A549 (cell line): ENCODE measurements at regions of chr11 and their contacts with region 1.

Region 1: DNA sequence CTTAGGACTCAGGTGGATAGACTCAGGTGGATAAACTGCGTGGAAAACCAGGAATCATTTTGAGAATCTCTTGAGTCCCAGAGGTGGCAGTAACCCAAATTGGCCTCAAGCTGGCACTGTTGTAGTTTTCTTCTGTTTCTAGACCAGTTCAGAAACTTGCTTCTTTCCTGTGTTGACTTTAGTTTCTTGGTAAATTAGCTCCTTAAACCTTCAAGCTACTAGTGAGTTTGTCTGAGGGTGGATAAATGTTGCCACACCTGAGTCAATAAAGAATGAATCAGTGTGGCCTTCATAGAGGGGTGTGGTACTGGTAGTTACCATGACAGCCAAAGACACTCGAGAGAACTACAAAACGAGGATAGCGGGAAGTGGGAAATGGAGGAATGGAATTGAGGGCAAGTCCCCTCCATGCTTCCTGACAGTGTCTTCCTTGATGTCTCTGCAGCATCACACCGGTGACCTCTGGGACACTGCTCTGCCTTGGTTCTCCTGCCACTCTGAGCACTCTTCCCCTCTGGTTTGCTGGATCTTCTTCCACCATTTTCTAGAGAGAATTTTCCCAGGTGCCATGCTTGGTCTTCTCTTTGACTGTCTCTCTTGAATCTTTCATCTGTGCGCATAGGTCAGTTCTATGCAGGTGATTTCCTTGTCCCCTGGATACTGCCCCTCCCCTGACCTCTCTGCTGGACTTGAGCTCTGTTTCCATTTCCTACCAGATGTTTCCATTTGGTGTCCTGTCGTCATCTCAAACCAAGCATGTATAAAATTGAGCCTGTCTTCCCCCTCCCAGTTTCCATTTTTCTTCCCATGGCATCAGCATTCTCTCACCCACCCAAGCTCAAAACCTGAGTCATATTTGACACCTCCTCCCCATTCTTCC is 7.2 kb downstream of the POLD4 start:
- DNase-seq: peak; percentile 83 to 97
- ATAC-seq: peak; percentile 84 to 90
- H3K4me3 ChIP-seq: no peak overlapping the region
- H3K27ac ChIP-seq: peak overlapping the region; percentile 65 to 82
- H3K4me1 ChIP-seq: peaks cover 62% of the 10 kb centered on the region
- CTCF ChIP-seq: peak; percentile 96
- EP300 ChIP-seq: peak; percentile 23 to 54; a peak in 1 of 5 replicates
- POLR2A ChIP-seq: no peak
- RAD21 ChIP-seq: peak; percentile 88

Region 2: GRCh38 chr11:67211656-67212436 is 134.3 kb before region 1 on chr11:
- CTCF ChIA-PET with region 1: no interaction called
- POLR2A ChIA-PET with region 1: no interaction called
- DNase-seq: no peak
- ATAC-seq: no peak
- H3K4me3 ChIP-seq: no peak overlapping the region
- H3K27ac ChIP-seq: no peak overlapping the region
- H3K4me1 ChIP-seq: no peaks in the 10 kb centered on the region
- CTCF ChIP-seq: no peak
- EP300 ChIP-seq: no peak
- POLR2A ChIP-seq: no peak
- RAD21 ChIP-seq: no peak

Region 3: GRCh38 chr11:67273260-67273992 is 72.7 kb before region 1 on chr11:
- CTCF ChIA-PET with region 1: no interaction called
- POLR2A ChIA-PET with region 1: no interaction called
- DNase-seq: no peak
- ATAC-seq: no peak
- H3K4me3 ChIP-seq: no peak overlapping the region
- H3K27ac ChIP-seq: no peak overlapping the region
- H3K4me1 ChIP-seq: peaks cover 11% of the 10 kb centered on the region; the same call in 1 of the 3 replicates
- CTCF ChIP-seq: no peak
- EP300 ChIP-seq: no peak
- POLR2A ChIP-seq: no peak
- RAD21 ChIP-seq: no peak

Region 4: DNA sequence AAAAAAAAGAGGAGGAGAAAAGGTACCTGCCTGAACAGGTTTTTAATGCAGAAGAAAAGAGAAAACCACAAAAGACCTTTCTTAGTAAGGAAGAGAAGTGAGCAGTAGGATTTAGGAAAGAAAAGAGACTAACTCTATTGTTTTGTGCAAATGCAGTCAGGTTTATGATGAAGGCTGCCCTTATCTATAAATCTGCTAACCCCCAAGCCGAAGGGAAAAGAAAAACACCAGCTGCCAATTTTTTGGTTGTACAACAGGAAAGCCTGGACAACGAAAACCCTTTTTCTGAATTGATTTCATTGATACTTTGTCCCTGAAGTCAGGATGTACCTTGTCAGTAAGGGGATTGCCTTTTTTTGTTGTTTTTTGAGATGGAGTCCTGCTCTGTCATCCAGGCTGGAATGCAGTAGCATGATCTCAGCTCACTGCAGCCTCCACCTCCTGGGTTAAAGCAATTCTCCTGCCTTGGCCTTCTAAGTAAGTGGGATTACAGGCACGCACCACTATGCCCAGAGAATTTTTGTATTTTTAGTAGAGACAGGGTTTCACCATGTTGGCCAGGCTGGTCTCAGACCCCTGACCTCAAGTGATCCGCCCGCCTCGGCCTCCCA is 14.0 kb before region 1 on chr11:
- CTCF ChIA-PET with region 1: interaction called, 71 read pairs
- POLR2A ChIA-PET with region 1: no interaction called
- DNase-seq: no peak
- ATAC-seq: no peak
- H3K4me3 ChIP-seq: no peak overlapping the region
- H3K27ac ChIP-seq: no peak overlapping the region
- H3K4me1 ChIP-seq: no peaks in the 10 kb centered on the region
- CTCF ChIP-seq: no peak
- EP300 ChIP-seq: no peak
- POLR2A ChIP-seq: no peak
- RAD21 ChIP-seq: no peak

Region 5: DNA sequence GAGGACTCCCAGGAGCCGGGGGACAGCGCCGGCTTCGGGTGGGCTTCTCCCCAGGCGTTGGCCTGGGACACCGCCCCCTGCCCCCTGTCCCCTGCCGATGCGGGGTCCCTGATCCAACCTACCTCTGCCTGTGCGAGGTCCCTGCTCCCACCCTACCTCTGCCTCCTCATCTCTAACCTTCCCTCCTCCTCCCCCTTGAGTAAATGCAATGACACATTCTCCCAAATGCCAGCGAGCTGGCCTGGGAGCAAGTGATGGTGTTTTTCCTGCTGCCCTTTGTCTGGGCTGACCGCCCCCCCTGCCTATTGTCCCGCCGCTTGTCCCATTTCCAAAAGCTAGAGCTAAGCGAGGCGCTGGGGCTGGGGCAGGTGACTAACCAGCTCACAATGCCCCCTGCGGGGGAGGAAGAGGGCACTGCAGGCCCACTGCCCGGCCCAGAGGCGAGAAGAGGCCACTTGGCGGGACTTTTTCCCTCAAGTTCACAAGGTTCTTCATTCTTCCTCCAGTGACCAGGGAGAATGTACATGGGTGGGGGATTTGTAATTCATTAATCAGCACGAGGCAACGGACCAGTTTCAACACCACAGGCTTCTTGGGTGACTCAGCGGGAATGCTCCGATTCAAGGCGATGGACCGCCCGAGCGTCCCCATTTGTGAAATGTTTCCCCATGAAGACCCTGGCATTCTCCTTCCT is 27.9 kb after region 1 on chr11:
- CTCF ChIA-PET with region 1: interaction called, 1,913 read pairs
- POLR2A ChIA-PET with region 1: interaction called, 172 read pairs
- DNase-seq: peak; percentile 96 to 100
- ATAC-seq: peak; percentile 41 to 71
- H3K4me3 ChIP-seq: peak overlapping the region; percentile 68
- H3K27ac ChIP-seq: peak overlapping the region; percentile 95 to 100
- H3K4me1 ChIP-seq: peaks cover 73% of the 10 kb centered on the region
- CTCF ChIP-seq: peak; percentile 29
- EP300 ChIP-seq: peak; percentile 87 to 93; a peak in 4 of 5 replicates
- POLR2A ChIP-seq: peak; percentile 36
- RAD21 ChIP-seq: peak; percentile 41 to 58

Region 6: DNA sequence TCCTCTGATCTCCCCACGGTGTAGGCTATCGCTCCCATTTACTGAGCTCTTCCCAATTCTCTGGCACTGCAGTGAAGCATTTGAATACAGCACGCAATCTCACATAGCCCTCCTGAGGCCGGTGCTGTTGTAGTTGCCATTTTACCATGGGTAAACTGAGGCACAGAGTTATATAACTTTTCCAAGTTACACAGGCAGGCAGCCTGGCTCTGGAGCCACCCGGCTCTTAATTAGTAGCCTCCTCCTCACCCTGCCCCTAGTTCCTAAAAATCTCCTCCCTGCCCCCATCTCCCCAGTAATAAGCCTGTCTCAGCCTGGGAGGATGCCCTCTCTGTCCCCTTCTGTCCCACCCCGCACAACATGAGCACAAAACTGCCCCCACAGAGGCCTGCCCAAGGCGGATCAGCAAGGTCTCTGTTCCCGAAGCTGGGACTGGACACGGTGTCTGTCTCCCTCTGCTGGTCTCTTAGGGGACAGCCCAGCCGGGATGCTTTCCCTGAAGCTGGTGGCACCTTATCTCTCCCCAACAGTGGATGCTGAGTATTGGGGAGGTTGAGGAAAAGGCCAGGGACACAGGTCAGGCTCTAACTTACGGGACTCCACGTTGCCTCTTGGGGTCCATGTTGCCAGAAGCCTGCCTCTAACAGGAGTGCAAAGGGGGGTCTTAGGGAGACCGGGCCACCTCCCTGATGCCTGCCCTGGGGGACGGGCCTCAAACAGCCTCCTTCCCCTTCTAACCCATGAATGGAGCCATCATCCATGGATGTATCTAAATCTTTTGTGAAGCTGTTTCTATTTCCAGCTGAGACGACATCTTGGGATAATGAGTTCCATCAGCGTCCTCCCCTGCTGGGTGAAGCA is 36.3 kb after region 1 on chr11:
- CTCF ChIA-PET with region 1: interaction called, 1,913 read pairs
- POLR2A ChIA-PET with region 1: interaction called, 172 read pairs
- DNase-seq: peak; percentile 74 to 83
- ATAC-seq: peak; percentile 63 to 65
- H3K4me3 ChIP-seq: no peak overlapping the region
- H3K27ac ChIP-seq: peak overlapping the region; percentile 95 to 100
- H3K4me1 ChIP-seq: peaks cover 82% of the 10 kb centered on the region
- CTCF ChIP-seq: peak; percentile 98
- EP300 ChIP-seq: no peak
- POLR2A ChIP-seq: no peak
- RAD21 ChIP-seq: peak; percentile 99 to 100

Region 7: GRCh38 chr11:67391304-67392132 is 45.4 kb after region 1 on chr11 and contains the start of gene RAD9A:
- CTCF ChIA-PET with region 1: interaction called, 1,913 read pairs
- POLR2A ChIA-PET with region 1: interaction called, 5 read pairs
- DNase-seq: peak; percentile 94 to 97
- ATAC-seq: peak; percentile 59 to 77
- H3K4me3 ChIP-seq: peak within 1 kb of the TSS; percentile 77
- H3K27ac ChIP-seq: peak within 1 kb of the TSS; percentile 85 to 90
- H3K4me1 ChIP-seq: peaks cover 19% of the 10 kb centered on the region; the same call in 2 of the 3 replicates
- CTCF ChIP-seq: no peak
- EP300 ChIP-seq: no peak; a peak in 1 of 5 replicates
- POLR2A ChIP-seq: peak; percentile 51
- RAD21 ChIP-seq: no peak
- polyA plus RNA-seq, gene RAD9A: 19.0 and 19.6 TPM in 2 replicates

Region 8: DNA sequence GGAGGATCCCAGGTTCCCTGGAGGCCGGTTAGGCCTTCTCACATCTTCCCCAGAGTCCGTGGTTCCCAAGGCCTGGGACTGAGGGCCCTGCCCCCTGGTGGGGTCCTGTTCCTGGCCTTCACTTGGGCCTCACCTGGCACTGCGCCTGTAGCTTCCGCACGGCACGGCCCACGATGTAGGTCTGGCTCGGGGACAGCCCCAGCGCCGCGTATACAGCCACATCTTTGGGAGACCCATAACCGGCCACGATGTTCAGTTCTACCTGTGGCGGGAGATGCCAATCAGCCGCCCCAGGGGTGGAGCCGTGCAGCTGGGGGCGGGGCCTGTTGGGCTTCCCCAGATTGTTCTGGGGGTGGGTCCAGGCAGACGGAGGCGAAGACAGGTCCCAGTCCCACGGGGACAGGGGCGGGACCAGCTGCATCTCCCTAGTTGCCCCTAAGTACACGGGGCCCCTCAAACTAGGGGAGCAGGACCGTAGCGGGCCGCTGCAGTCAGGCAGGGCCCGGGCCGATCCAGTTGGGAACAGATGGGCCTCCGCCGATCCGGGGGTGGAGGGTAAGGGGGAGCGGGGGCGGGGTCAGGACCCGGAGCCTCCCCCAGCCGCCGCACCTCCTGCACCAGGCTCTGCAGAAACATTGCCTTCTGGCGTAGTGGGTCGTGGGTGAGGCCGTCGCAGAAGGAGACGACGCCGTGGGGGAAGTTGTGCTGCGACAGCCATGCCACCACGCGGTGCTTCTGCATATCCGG is 146.8 kb after region 1 on chr11:
- CTCF ChIA-PET with region 1: interaction called, 10 read pairs
- POLR2A ChIA-PET with region 1: no interaction called
- DNase-seq: no peak
- ATAC-seq: peak in 1 of 2 experiments; percentile 10; a peak in 3 of 6 replicates
- H3K4me3 ChIP-seq: no peak overlapping the region
- H3K27ac ChIP-seq: no peak overlapping the region
- H3K4me1 ChIP-seq: no peaks in the 10 kb centered on the region
- CTCF ChIP-seq: no peak
- EP300 ChIP-seq: no peak
- POLR2A ChIP-seq: no peak
- RAD21 ChIP-seq: no peak

Region 9: DNA sequence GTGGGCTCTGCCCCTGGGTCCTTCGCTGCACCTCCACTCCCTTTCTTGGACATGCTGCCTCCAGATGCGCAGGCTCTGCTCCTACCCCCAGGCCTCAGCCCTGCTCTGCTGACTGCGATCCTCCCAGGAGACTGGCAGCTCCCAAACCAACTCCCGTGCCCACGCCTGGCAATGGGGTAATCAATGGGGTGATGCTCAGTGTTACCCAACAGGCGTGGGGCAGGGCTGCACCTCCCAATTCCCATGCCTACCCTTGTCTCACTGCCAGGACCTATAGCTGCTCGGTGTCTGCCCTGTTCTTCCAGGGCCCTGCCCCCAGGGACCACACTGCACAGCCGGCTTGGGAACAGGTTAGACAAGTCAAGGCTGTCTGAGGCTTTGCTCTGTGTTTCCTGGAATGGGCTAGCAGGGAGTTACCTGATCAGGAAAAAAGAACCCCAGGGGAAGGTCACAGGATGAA is 328.3 kb after region 1 on chr11 and contains the start of gene ALDH3B2:
- CTCF ChIA-PET with region 1: no interaction called
- POLR2A ChIA-PET with region 1: no interaction called
- DNase-seq: no peak
- ATAC-seq: no peak
- H3K4me3 ChIP-seq: no peak within 1 kb of the TSS
- H3K27ac ChIP-seq: no peak within 1 kb of the TSS
- H3K4me1 ChIP-seq: no peaks in the 10 kb centered on the region
- CTCF ChIP-seq: no peak
- EP300 ChIP-seq: no peak
- POLR2A ChIP-seq: no peak
- RAD21 ChIP-seq: no peak
- polyA plus RNA-seq, gene ALDH3B2: not detected in 2 replicates